ENCODE measurements at regions of chr18 and their contacts with region 1.

Region 1: DNA sequence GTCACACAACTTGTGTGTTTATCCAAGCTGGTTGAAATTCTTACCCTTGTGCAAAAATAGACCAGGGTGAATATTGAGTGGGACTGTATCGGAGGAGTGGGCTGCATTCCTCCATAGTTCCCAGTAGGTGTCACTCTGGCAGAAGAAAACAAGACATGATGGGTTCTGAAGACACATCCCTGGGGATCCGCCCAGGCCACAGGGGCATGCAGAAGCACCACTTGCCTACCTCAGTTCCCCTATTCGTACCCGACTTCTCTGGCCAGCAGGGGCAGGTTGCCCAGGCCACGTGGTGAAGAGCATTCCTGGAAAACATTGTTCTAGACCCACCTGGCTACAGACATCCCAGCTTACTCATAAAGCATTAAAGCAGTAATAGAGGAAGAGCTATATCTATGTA is 168.2 kb downstream of the FAM210A start:
- DNase-seq: peak in 5 of 10 donors; percentile 41 to 94 (median 59)

Region 2: DNA sequence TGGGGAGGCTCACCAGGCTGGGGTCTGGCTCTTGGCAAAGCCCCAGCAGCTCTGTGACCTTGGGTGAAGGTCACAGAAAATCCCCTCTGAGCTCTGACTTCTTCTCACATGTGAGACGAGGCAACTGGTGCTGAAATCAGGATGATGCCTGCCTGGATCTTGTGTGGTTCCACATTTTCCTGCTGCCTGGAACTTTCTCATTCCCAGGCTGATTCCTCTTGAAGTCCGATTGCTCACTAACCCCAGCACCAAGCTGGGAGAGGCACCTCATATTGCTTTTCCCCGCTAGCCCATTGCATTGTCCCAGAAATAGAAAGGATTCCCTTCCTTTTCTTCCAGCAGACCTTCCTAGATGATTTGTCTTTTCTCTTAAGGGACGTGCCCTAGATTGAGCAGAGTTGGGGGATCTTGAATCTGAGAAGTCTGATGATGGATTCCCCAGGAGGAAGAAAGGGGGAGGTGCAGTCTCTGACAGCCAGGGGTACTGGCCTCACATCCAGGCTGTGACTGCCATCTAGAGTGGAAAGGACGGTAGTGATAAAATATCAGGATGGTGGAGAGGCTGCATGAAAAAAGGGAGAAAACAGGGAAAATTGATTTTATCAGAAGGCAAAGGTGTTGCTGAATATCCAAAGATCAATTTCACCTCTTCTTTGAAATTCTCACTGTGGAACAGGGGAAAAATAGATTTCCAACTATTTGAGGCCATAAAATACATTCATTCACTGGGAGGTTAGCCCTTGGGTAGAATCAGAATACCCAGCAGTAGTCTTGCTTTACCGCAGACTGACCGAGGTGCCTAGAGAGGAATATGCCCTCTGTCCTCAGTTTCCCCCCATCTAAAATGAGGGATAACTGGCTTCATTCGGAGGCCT is 72.0 kb after region 1 on chr18:
- intact Hi-C with region 1: loop called (anchors 1 kb)
- DNase-seq: peak in 6 of 10 donors; percentile 67 to 95 (median 70)

Region 3: GRCh38 chr18:13726232-13726971 is 168.3 kb after region 1 on chr18 and contains the starts of genes FAM210A and RNMT:
- intact Hi-C with region 1: loop called (anchors 1 kb)
- DNase-seq: peak; percentile 94 to 99 (median 96)

Measured in posterior cingulate gyrus (tissue), 11 donors.